Endothelial cell of umbilical vein (primary cell): ENCODE measurements at regions of chr2 and their contacts with region 1.

Region 1: DNA sequence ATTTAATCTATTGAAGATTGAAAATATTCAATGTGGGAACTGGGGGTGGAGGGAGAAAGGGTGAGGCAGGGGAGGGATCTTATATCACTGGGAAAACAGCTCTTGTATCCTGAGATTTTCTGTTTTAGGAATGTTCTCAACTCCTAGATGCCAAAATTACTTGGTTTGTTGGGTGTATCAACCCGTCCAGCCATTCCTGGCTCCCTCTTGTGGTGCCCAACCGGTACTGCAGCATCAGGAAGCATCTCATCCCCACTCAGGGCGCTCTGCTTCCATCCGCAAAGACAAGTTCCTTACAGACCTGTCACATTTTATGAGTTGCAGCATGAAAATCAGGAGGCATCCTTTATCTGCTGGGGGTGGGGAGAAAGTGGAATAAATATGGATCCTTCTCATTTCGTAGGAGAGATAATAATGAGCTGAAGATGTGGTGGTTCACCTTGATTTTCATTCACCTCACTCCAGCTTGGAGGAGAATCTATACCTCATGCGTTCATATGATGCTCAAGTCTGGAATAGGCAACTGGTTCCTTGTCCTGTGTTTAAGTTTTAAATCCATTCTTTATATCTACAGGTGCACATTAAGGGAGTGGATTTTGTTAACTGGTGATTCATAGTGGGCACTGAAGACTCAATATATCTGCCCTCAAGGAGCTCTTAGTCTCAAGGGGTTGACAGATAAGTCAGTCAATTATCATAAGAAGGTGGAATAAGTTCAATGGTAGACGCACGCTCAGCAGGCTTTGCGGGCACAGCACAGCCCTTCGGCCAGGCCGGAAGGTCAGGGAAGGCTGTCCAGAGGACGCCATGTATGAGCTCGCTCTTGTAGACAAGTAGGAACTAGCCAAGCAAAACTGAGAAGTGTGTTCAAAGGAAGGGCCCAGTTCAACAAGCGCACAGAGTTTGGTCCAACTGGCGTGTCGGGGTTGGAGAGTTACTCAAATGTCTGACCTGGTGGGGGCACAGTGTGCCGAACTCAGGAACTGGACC is 127.3 kb downstream of the RNF144A start:
- DNase-seq: peak; percentile 64
- H3K4me3 ChIP-seq: no peak overlapping the region
- H3K27ac ChIP-seq: no peak overlapping the region
- H3K4me1 ChIP-seq: peaks cover 7% of the 10 kb centered on the region
- H3K27me3 ChIP-seq: no peaks in the 10 kb centered on the region
- CTCF ChIP-seq: peak; percentile 91 to 92
- POLR2A ChIP-seq: no peak

Region 2: DNA sequence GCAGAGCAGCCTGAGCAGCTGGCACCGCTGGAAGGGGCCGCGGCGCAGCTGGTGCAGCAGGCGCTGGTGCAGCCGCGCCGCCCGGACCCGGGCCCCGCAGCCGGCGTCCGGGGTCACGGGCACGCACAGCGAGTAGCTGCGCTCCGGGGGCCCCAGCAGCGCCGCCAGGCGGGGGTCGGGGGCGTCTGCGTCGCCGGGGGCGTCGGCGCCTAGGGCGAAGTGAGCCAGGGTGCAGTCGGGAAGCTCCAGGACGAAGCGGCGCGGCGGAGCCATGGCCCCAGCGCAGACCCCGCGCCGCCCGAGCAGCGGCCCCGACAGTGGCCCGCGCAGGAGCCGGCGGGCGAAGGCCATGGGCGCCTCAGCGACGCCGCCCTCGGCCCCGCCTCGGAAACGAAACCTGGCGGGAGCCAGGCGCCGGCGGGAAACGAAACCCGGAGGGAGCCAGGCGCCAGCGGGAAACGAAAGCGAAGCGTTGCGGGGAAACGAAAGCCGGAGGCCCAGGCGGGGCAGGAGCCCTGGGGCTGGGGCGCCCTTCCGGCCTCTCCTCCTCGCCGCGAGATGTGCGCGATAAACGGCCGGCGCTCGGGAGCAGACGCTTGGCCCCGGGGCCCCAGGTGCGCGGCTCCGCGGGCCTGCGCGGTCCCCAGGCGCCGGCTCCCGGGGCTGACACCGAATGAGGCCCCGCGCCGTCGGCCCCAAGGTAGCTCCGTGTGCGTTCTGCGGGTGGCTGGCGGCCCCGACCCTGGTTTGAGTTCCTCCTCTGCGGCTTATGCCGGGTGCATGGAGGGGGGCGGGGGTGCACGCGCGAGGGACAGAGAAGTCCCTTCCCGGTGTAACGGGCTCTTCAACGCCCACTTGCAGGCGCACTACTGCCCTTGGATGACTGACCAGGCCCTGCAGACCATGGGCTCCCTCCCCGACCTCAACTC is 178.9 kb before region 1 on chr2 and contains the start of gene CMPK2:
- CTCF ChIA-PET with region 1: interaction called, 11 read pairs
- POLR2A ChIA-PET with region 1: no interaction called
- dilution Hi-C with region 1: no loop called
- intact Hi-C with region 1: no loop called
- DNase-seq: peak; percentile 13
- H3K4me3 ChIP-seq: peak within 1 kb of the TSS; percentile 35 to 55 (median 44)
- H3K27ac ChIP-seq: no peak within 1 kb of the TSS
- H3K4me1 ChIP-seq: peaks cover 4% of the 10 kb centered on the region
- H3K27me3 ChIP-seq: peaks cover 6 to 7% of the 10 kb centered on the region in 2 experiments
- CTCF ChIP-seq: peak in 1 of 2 donors; percentile 12
- POLR2A ChIP-seq: no peak
- total RNA-seq, gene CMPK2: 0.69 and 0.81 TPM in 2 replicates

Region 3: DNA sequence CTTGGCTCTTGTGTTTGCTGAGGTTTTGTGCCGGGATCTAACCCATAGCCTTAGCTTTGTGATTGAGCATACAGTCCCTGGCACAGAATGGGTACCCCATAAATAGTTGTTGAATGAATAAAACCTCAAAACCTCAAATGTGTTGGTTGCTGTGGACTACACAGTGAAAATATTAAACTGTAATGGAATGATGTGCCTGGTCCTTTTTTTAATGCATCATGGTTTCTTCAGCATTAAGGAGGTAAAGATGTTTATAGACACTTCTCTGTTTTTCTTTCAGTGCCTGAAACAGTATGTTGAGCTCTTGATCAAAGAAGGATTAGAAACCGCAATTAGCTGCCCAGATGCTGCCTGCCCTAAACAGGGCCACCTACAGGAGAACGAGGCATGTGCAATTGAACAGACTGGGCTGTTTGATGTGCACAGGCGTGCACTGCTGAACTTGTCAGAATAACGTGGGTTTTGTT is 30.3 kb before region 1 on chr2:
- CTCF ChIA-PET with region 1: interaction called, 10 read pairs
- POLR2A ChIA-PET with region 1: no interaction called
- dilution Hi-C with region 1: no loop called
- intact Hi-C with region 1: no loop called
- DNase-seq: no peak
- H3K4me3 ChIP-seq: no peak overlapping the region
- H3K27ac ChIP-seq: no peak overlapping the region
- H3K4me1 ChIP-seq: no peaks in the 10 kb centered on the region
- H3K27me3 ChIP-seq: no peaks in the 10 kb centered on the region
- CTCF ChIP-seq: peak; percentile 21 to 54
- POLR2A ChIP-seq: no peak

Region 4: DNA sequence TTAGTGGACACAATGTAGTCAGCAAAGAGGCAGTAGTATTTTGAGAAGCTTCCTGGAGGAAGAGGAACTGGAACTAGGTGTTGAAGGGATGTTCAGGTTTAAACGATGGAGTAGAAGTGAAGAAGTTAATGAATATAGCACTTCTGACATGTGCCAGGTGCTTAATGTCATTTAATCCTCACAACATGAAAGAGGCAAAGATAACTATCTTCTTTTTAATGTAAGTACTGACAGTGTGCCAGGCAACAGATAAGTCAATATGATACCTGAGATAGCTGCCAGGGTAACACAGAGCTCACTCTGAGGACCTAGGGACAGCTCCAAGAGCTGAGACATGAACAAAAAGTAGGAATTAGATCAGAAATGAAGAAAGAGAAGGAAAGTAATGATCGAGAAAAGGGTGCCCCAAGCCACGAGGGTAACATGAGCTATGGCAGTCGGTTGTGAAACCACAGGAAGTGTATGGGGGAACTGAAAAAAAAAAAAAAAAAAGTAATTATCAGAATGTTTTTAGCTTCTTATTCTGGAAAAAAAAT is 13.4 kb after region 1 on chr2:
- CTCF ChIA-PET with region 1: interaction called, 23 read pairs
- POLR2A ChIA-PET with region 1: no interaction called
- dilution Hi-C with region 1: no loop called
- intact Hi-C with region 1: no loop called
- DNase-seq: no peak
- H3K4me3 ChIP-seq: no peak overlapping the region
- H3K27ac ChIP-seq: no peak overlapping the region
- H3K4me1 ChIP-seq: no peaks in the 10 kb centered on the region
- H3K27me3 ChIP-seq: peaks cover 0 to 3% of the 10 kb centered on the region in 2 experiments
- CTCF ChIP-seq: no peak
- POLR2A ChIP-seq: no peak